ENCODE measurements at regions of chrX and their contacts with region 1.

Region 1: DNA sequence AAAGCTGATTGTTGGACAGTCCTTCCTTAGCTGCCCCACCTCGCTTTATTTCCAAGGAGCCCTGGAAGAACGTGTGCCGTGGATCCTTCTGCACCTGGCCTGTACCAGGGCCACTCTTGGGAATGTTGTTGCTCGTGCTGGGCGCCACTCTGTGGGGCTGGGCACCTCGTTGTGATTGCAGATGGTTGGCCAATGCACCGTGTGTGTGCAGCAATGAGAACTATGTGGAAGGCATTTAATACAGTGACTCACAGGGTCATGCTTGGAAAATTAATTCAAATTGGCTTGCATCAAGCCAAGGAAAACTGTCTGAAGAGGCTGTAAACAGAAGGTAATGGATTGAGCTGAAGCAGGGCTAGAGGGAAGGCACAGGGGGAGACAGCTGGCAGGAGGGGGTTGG is 37.0 kb upstream of the CD99L2 start:
- DNase-seq: no peak
- H3K4me3 ChIP-seq: no peak overlapping the region
- H3K27ac ChIP-seq: no peak overlapping the region
- H3K4me1 ChIP-seq: no peaks in the 10 kb centered on the region
- H3K27me3 ChIP-seq: no peaks in the 10 kb centered on the region
- CTCF ChIP-seq: no peak
- EP300 ChIP-seq: no peak
- POLR2A ChIP-seq: no peak

Region 2: GRCh38 chrX:151633157-151633556 is 697.7 kb after region 1 on chrX:
- in situ Hi-C with region 1: no loop called
- intact Hi-C with region 1: loop called (anchors 5 kb)
- DNase-seq: no peak
- H3K4me3 ChIP-seq: no peak overlapping the region
- H3K27ac ChIP-seq: no peak overlapping the region
- H3K4me1 ChIP-seq: no peaks in the 10 kb centered on the region
- H3K27me3 ChIP-seq: no peaks in the 10 kb centered on the region
- CTCF ChIP-seq: no peak
- EP300 ChIP-seq: no peak
- POLR2A ChIP-seq: no peak